ENCODE measurements at regions of chr11 and their contacts with region 1.

Region 1: DNA sequence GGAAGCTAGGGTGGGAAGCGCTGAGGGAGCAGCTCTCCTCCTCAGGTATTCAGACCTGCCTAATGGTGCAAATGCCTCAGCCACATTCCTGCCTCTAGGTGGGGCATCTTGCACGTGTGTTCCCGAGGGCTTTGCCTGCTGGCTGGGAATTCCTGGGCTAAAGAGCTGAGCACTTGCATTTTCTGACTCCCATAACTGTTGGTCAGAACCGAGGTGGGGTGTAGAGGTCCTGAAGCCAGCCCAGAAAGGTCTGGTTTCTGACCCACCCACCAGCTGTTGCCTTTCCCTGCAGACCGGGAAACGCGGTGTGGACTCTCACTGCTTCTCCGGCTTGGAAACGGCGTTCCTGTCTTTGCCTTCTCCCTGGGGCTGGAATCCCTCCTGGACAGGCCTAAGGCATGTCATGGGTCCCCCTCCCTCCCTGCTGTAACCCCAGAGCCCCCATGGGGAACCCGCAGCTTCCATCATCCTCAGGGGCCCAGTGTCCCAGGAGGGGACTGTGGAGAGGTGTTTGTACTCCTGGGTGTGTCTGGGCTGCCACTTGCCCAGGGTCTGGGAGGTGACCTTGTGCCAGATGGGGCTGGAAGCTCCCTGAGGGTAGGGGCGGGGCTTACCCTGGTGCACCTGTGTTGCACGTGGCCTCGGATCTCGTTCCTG is 24.0 kb upstream of the SMIM38 start:
- DNase-seq: peak; percentile 82
- ATAC-seq: peak; percentile 87

Region 2: GRCh38 chr11:69174831-69175230 is 43.1 kb after region 1 on chr11:
- intact Hi-C with region 1: loop called (anchors 1 kb)
- DNase-seq: no peak
- ATAC-seq: no peak

Region 3: DNA sequence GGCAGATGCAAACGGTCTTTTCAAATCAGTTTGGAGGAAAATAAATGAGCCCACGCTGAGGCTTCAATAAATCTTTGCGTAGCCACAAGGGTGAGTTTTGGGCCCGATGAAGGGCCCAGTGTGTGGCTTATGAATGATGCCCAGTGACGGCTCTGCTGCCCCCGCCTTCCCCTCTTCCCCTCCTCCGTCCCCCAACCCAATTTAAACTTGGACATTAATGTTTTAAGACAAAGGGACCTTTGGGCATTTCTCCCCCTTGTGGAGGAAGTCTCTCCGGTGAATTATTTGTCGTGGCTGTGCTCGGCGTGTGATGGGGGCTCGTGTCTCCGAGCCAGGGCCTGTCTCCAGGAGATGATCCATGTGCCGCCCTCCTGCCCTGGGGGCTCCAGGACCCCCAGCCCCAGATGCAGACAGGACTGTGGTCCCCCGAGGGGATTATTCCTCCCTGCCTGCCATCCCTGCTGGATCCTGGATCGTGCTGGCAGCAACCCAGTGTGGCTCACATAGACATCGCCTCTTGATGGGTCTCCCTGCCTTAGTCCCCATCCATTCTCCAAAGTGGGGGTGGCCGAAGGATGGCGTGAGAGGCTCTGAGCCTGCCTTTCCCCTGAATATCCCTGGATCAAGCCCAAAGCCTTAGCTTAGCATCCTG is 80.3 kb after region 1 on chr11:
- intact Hi-C with region 1: loop called (anchors 10 kb)
- DNase-seq: peak; percentile 49
- ATAC-seq: no peak

Region 4: DNA sequence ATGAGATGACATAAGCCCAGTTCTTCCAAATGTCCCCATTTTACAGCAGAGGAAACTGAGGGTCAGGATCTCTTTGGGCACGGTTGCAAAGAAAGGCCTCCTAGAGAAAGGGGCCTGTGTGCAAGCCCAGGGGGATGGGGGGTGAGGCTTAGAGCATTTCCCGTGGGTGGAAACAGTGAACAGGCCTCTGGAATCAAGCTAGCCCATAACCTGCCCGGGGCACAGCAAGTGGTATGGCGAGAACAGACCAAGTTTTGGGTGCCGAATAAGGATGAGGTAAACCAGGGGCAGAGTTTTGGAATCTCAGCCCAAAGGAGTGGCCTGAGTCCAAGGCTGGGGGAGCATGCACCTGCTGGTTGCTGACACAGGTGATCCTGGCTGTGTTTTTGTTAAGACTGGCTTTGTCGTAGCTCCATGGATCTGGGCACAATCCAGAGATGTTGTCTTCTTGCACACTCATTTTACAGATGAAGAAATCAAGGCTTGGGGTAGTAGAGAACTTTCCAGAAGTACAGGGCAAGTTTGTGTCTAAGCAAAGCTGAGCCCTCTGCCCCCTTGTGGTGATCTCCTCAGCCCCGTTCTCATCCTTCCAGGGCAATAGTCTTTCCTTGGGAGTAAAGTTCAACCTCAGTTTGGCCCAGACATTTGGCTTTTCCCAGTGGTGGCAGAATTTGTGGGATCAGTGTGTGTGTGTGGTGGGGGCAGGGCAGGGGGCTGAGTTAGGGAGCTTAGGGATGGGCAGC is 108.7 kb after region 1 on chr11:
- intact Hi-C with region 1: no loop called
- DNase-seq: no peak
- ATAC-seq: no peak

Region 5: GRCh38 chr11:69609351-69609750 is 477.6 kb after region 1 on chr11:
- intact Hi-C with region 1: no loop called
- DNase-seq: no peak
- ATAC-seq: no peak